AG04450 (cell line): ENCODE measurements at regions of chr10 and their contacts with region 1.

Region 1: GRCh38 chr10:132132421-132132841 is 54.3 kb upstream of the DPYSL4 start:
- DNase-seq: no peak
- H3K4me3 ChIP-seq: no peak overlapping the region
- H3K27ac ChIP-seq: no peak overlapping the region
- H3K27me3 ChIP-seq: peaks cover 12% of the 10 kb centered on the region
- CTCF ChIP-seq: no peak

Region 2: DNA sequence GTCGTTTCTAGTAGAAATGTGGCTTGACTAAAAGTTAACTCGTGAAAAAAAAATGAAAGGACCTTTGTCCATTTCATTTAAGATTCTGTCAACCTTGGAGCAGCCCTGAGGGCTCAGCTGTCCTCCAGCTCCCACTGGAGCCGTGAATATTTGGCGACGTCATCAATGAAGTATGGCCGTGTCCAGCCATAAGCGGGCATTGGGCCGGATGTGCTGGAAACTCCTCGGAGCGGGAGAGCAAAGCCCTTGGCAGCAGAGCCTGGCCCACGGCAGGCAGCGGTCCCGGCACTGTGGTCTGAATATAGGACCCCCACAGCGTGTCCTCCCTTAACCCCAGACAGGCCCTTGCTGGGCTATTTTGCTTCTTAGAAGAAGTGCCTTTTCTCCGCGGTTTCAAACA is 16.7 kb before region 1 on chr10:
- CTCF ChIA-PET with region 1: no interaction called
- POLR2A ChIA-PET with region 1: no interaction called
- DNase-seq: no peak
- H3K4me3 ChIP-seq: no peak overlapping the region
- H3K27ac ChIP-seq: no peak overlapping the region
- H3K27me3 ChIP-seq: peaks cover 6% of the 10 kb centered on the region
- CTCF ChIP-seq: no peak

Region 3: DNA sequence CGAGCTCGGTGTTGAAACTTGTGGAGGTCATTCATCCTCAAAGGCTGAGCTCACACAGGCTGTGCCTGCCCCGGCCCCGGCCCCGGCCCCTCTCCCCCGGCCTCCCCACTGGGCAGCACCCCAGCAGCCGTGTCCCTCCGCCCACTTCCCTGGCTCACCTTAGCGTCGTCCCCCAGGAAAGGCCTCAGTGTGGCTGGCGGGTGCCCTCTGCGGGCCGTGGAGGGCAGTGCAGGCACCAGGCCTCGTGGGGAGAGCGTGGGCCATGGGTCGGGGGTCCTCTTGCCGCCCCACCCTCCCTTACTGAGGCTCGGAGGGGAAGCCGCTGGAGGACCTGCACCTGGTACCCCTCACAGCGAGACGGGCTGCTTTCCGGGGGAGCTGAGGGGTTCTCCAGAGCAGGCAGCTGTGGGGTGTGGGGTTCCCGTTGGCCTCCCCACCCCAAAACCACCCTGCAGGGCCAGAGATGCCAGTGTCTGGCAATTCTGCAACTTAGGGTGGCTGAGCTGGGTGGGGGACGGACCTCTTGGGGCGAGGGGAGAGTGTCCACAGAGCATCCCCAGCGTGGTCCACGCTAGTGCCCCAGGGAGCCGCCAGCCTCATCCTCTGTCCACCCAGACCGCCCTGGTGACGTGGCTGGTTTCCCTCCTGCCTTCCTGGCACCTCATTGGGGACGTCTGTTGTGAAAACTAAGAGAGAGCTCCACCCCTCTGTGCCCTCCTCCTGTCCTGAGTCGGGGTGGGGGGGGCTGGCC is 10.2 kb after region 1 on chr10:
- CTCF ChIA-PET with region 1: interaction called, 13 read pairs
- POLR2A ChIA-PET with region 1: no interaction called
- DNase-seq: no peak
- H3K4me3 ChIP-seq: no peak overlapping the region
- H3K27ac ChIP-seq: no peak overlapping the region
- H3K27me3 ChIP-seq: peaks cover 4% of the 10 kb centered on the region
- CTCF ChIP-seq: peak; percentile 66